AG04449 (cell line): ENCODE measurements at regions of chr20 and their contacts with region 1.

Region 1: DNA sequence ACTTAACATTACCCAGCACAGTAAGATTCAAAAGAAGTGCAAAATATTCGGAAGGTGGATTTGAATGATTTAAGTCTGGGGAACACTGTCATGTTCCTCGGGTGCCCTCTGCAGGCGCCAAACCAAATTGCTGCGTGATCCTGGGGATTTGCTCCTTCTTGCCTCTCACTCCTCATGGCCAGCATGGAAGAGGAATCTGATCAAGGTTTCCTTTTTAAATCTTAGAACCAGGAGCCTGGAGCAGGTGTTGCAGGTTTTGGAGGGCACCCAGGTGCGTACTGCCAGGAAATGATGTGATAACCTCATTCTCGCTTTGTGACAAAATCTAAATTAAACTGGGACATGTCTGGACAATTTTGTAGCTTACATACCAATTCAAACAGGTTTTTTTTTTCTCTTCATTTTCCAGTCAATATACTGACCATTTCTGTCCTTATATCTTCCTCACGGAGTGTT is 8.1 kb upstream of the PFDN4 start:
- DNase-seq: peak; percentile 37
- H3K4me3 ChIP-seq: no peak overlapping the region
- CTCF ChIP-seq: peak; percentile 88

Region 2: GRCh38 chr20:53899351-53900167 is 300.2 kb before region 1 on chr20:
- CTCF ChIA-PET with region 1: no interaction called
- POLR2A ChIA-PET with region 1: no interaction called
- DNase-seq: no peak
- H3K4me3 ChIP-seq: no peak overlapping the region
- CTCF ChIP-seq: no peak

Region 3: DNA sequence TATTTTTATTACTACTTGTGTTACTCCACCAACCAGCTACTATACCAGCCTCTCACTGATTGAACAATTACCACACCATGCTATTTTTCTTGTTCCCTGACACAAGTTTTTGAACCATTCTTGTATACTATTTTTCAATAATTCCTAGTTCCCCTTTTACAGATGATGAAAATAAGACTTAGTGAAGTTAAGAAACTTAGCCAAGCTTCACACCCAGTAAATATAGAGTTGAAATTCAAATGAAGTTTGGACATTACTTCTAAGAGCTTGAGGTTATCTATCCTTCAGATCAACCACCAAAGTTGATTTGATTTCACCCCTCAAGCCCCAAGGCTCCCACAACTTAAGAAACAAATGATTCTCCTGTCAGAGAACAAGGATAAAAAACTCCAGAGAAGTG is 116.3 kb before region 1 on chr20:
- CTCF ChIA-PET with region 1: interaction called, 15 read pairs
- POLR2A ChIA-PET with region 1: no interaction called
- DNase-seq: no peak
- H3K4me3 ChIP-seq: no peak overlapping the region
- CTCF ChIP-seq: no peak

Region 4: DNA sequence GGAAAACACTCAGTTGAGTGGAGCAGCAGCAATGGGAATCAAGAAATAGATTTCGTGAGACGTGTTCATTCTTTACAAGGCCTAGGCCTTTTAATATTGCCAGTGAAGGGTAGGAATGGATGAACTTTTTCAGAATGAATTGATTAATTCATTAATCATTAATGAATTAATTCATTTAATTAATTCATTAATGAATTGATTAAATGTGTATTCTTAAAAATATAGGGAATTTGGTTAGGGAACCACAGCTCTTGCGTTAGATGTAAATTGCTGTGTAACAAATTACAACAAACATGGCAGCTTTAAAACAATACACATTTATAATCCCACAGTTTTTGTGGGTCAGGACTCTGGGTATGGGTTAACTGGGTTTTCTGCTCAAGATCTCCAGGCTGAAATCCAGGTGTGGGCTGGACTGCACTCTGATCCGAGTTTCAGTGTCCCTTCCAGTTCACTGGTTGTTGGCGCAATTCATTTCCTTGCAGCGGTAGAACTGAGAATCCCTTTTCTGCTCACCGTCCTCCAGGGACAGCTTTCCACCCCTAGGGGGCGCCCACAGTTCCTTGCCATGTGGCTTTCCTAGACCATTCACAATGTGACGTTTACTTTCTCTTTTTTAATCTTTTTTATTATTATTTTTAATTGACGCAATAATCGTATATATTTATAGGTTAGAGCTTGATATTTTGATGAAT is 96.5 kb before region 1 on chr20:
- CTCF ChIA-PET with region 1: interaction called, 1,179 read pairs
- POLR2A ChIA-PET with region 1: no interaction called
- DNase-seq: no peak
- H3K4me3 ChIP-seq: no peak overlapping the region
- CTCF ChIP-seq: peak; percentile 87

Region 5: DNA sequence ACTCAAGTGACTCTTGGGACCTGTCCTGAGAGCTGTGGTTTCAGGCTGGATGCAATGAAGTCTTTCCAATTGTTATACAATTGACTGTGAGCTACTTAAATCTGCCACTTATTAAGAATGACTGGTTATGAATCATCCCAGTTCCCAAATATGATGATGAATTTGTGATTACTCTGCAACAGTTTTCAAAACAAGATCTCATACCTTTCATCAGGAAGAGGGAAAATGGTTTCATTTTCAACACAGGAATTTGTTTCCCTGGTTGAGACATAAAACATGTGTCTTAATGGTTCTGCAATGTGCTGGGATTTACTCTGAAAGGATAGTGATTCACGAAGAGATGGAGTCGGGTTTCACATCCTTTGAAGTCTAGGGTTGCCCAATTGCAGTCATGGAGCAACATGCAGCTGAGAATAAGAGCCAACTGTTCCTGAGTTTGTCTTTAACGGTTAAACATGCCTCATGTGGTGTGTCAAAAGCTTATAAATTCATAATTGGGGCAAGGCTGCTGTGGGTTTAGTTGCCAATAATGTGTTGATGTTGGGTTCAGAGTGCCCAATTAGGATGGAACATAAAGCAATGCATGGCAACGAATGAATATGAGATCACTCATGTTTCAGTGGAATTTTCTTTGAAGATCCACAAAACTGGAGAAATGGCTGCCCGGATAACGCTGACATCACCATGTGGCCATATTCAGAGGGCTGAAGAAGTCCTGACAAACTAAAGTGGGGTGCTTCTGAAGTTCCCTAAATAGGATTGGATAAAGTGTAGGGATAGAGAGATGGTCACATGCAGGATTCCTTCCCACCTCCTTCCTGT is 66.9 kb before region 1 on chr20:
- CTCF ChIA-PET with region 1: interaction called, 17 read pairs
- POLR2A ChIA-PET with region 1: no interaction called
- DNase-seq: peak; percentile 95
- H3K4me3 ChIP-seq: peak overlapping the region; percentile 35
- CTCF ChIP-seq: no peak

Region 6: GRCh38 chr20:54173653-54174456 is 25.9 kb before region 1 on chr20 and contains the start of gene CYP24A1:
- CTCF ChIA-PET with region 1: interaction called, 42 read pairs
- POLR2A ChIA-PET with region 1: no interaction called
- DNase-seq: no peak
- H3K4me3 ChIP-seq: peak within 1 kb of the TSS; percentile 25
- CTCF ChIP-seq: no peak

Region 7: GRCh38 chr20:54624706-54625390 is 425.1 kb after region 1 on chr20:
- CTCF ChIA-PET with region 1: no interaction called
- POLR2A ChIA-PET with region 1: no interaction called
- DNase-seq: no peak
- H3K4me3 ChIP-seq: no peak overlapping the region
- CTCF ChIP-seq: no peak

Region 8: GRCh38 chr20:54643791-54644190 is 444.0 kb after region 1 on chr20:
- CTCF ChIA-PET with region 1: interaction called, 44 read pairs
- POLR2A ChIA-PET with region 1: no interaction called
- DNase-seq: peak; percentile 62
- H3K4me3 ChIP-seq: no peak overlapping the region
- CTCF ChIP-seq: no peak

Region 9: GRCh38 chr20:54863058-54863700 is 663.4 kb after region 1 on chr20:
- CTCF ChIA-PET with region 1: no interaction called
- POLR2A ChIA-PET with region 1: no interaction called
- DNase-seq: no peak
- H3K4me3 ChIP-seq: no peak overlapping the region
- CTCF ChIP-seq: no peak